Activated CD4-positive, alpha-beta T cell treated with anti-CD3 and anti-CD28 coated beads for 36 hours (primary cell): ENCODE measurements at regions of chrX and their contacts with region 1.

Region 1: DNA sequence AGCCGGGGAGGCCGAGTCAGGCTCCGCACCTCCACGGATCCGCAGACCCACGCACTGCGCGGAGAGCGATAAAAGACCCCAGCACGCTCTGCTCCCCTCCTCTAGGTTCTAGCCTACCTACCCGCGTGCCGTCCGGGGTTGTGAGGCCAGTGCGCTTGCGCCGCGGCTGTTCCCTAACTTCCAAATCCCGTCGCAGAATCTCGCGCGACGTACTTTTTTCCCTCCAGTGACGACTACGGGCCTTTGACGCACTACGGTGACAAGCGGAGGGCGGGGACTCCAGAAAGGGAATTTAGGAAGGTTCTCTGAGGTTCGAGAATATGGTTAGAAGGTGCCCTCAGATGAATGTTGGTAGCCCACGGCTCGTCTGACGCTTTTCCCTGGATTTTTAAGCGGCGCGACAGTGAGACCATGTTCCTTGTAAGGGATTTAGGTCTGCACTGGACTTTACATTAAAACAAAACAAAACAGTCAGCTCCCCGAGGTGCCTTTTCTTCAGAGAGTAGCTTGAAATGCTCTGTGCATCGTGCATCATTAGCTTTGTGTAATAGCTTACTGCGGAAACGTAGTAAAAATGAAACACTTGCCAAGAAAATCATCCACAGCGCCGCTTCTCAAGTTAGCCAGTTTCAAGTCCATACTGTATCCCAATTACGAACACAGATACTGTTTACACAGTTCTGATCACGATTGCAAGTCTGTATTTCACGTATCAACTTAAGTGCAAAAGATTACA is at the start of gene NKRF:
- DNase-seq: peak; percentile 94
- ATAC-seq: peak; percentile 88
- H3K4me3 Mint-ChIP-seq: peak within 1 kb of the TSS; percentile 93
- H3K27ac Mint-ChIP-seq: peak within 1 kb of the TSS; percentile 97
- H3K4me1 Mint-ChIP-seq: peaks cover 34% of the 10 kb centered on the region
- H3K27me3 Mint-ChIP-seq: no peaks in the 10 kb centered on the region
- total RNA-seq, gene NKRF: 23.8 to 25.0 TPM

Region 2: GRCh38 chrX:118152721-118153120 is 1453.7 kb before region 1 on chrX:
- CTCF ChIA-PET with region 1: no interaction called
- POLR2A ChIA-PET with region 1: no interaction called
- intact Hi-C with region 1: no loop called
- DNase-seq: no peak
- ATAC-seq: no peak
- H3K4me3 Mint-ChIP-seq: no peak overlapping the region
- H3K27ac Mint-ChIP-seq: no peak overlapping the region
- H3K4me1 Mint-ChIP-seq: no peaks in the 10 kb centered on the region
- H3K27me3 Mint-ChIP-seq: no peaks in the 10 kb centered on the region

Region 3: GRCh38 chrX:119343856-119344255 is 262.6 kb before region 1 on chrX:
- CTCF ChIA-PET with region 1: no interaction called
- POLR2A ChIA-PET with region 1: no interaction called
- intact Hi-C with region 1: no loop called
- DNase-seq: no peak
- ATAC-seq: peak; percentile 64
- H3K4me3 Mint-ChIP-seq: no peak overlapping the region
- H3K27ac Mint-ChIP-seq: no peak overlapping the region
- H3K4me1 Mint-ChIP-seq: no peaks in the 10 kb centered on the region
- H3K27me3 Mint-ChIP-seq: peaks cover 18% of the 10 kb centered on the region

Region 4: DNA sequence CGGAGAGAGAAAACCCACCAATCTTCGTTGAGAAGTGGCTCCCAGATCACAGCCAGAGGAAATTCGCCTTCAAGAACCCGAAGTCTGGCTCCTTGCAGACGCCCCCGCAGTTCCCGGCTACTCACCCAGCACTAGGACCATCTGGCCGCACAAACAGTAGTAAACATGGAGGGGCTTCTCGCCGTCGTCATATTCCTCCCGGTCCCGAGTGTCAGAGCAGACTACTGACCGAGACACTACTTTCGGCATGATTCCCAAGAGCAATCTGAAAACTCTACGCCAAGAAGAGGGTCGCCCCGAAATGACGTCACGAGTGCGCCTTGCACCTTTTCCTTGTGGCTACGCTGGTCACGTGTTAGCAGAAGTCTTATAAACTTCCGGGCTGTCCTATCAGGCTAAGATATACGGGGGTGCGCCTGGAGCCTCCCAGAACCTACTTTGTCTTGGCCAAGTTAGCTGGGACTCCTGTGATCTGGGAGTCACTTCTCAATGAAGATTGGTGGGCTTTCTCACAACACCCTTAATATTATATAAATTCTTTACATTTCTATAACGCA is 41.3 kb before region 1 on chrX and contains the start of gene STEEP1:
- CTCF ChIA-PET with region 1: no interaction called
- POLR2A ChIA-PET with region 1: no interaction called
- intact Hi-C with region 1: loop called (anchors 2 kb)
- DNase-seq: peak; percentile 93
- ATAC-seq: peak; percentile 99
- H3K4me3 Mint-ChIP-seq: peak within 1 kb of the TSS; percentile 89
- H3K27ac Mint-ChIP-seq: peak within 1 kb of the TSS; percentile 91
- H3K4me1 Mint-ChIP-seq: peaks cover 12% of the 10 kb centered on the region
- H3K27me3 Mint-ChIP-seq: no peaks in the 10 kb centered on the region
- total RNA-seq, gene STEEP1: 21.3 to 21.7 TPM

Region 5: DNA sequence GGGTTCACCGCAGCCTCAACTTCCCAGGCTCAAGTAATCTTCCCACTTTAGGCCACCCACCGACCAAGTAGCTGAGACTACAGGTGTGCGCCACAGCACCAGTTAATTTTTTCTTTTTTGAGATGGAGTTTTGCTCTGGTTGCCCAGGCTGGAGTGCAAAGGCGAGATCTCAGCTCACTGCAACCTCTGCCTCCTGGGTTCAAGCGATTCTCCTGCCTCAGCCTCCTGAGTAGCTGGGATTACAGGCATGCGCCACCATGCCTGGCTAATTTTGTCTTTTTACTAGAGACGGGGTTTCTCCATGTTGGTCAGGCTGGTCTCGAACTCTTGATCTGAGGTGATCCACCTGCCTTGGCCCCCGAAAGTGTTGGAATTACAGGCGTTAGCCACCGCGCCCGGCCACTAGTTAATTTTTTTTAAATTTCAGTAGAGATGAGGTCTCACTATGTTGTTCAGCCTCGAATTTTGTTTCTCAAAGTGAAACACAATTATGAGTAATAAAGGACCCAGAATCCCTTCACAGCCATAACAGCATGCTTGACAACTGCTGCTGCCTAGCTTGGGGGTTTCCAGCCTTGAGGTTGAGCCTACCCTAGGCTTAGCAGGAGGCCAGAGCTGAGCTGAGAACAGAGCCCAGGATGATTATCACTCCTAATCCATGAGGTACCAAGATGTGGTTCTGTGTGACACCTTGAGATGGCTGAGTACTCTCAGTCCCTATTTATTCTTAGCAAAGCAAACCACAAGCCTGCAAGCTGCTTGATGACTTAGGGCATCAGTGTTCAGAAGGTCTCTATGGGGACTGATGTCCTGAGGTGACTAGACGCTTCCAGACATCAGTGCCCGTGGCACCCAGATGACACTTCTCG is 41.3 kb after region 1 on chrX:
- CTCF ChIA-PET with region 1: interaction called, 6 read pairs
- POLR2A ChIA-PET with region 1: no interaction called
- intact Hi-C with region 1: loop called (anchors 1 kb)
- DNase-seq: peak; percentile 81
- ATAC-seq: peak; percentile 96
- H3K4me3 Mint-ChIP-seq: peak overlapping the region; percentile 32
- H3K27ac Mint-ChIP-seq: peak overlapping the region; percentile 91
- H3K4me1 Mint-ChIP-seq: peaks cover 36% of the 10 kb centered on the region
- H3K27me3 Mint-ChIP-seq: no peaks in the 10 kb centered on the region

Region 6: GRCh38 chrX:119693040-119693995 is 86.9 kb after region 1 on chrX and contains the start of gene SEPTIN6:
- CTCF ChIA-PET with region 1: no interaction called
- POLR2A ChIA-PET with region 1: interaction called, 5 read pairs
- intact Hi-C with region 1: loop called (anchors 1 to 2 kb)
- DNase-seq: peak; percentile 90
- ATAC-seq: peak; percentile 53
- H3K4me3 Mint-ChIP-seq: peak within 1 kb of the TSS; percentile 98
- H3K27ac Mint-ChIP-seq: peak within 1 kb of the TSS; percentile 98
- H3K4me1 Mint-ChIP-seq: peaks cover 3% of the 10 kb centered on the region
- H3K27me3 Mint-ChIP-seq: no peaks in the 10 kb centered on the region
- total RNA-seq, gene SEPTIN6: 183 to 233 TPM

Region 7: GRCh38 chrX:119753571-119754257 is 147.3 kb after region 1 on chrX:
- CTCF ChIA-PET with region 1: interaction called, 4 read pairs
- POLR2A ChIA-PET with region 1: interaction called, 4 read pairs
- intact Hi-C with region 1: loop called (anchors 1 to 10 kb)
- DNase-seq: peak; percentile 67
- ATAC-seq: peak; percentile 51
- H3K4me3 Mint-ChIP-seq: peak overlapping the region; percentile 39
- H3K27ac Mint-ChIP-seq: peak overlapping the region; percentile 97
- H3K4me1 Mint-ChIP-seq: peaks cover 42% of the 10 kb centered on the region
- H3K27me3 Mint-ChIP-seq: no peaks in the 10 kb centered on the region